Heart right ventricle (tissue), 16 donors: ENCODE measurements at regions of chr16 and their contacts with region 1.

Region 1: DNA sequence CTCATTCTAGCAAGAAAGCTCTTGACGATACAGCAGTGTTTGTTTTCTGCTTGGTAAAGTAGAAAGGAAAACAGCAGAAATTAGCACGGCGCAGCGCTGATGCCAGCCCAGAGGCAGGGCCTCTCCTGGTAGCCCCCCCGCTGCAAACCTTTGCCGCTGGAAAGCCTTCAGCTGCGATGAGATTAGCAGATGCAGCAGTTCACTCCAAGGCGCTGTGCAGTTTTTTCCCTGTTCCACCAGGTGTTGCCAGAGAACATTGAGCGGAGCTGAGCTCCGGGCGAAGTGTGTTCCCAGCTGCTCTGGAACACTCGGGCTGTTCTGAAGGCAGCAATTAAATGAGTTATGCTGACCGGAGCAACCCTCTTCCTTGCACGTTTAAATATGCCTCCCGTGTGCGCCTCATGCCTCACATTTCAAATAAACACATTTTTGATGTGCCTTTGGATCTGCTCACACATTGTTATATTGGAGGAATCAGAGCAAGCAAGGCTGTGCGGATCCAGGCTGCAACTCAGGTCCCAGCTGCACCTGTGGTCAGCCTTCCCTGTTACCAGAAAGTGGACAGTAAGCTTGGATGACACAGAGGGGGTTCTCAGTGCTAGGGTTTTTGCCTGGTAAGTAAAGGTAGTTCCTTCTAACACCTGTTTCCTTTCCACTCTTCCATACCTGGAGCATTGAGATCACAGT is 72.7 kb downstream of the RBFOX1 start:
- DNase-seq: peak; percentile 49 to 50
- ATAC-seq: peak; percentile 86 to 96 (median 94)
- H3K4me3 ChIP-seq: peak overlapping the region in 3 of 10 donors; percentile 0 to 24 (median 1)
- H3K27ac ChIP-seq: no peak overlapping the region
- H3K4me1 ChIP-seq: peaks cover 0 to 20% (median 3%) of the 10 kb centered on the region in 9 donors
- H3K27me3 ChIP-seq: no peaks in the 10 kb centered on the region
- CTCF ChIP-seq: peak; percentile 25 to 69 (median 47)

Region 2: GRCh38 chr16:7602291-7602950 is 197.1 kb after region 1 on chr16:
- intact Hi-C with region 1: loop called in 1 of 10 experiments (anchors 10 kb)
- DNase-seq: no peak
- ATAC-seq: no peak
- H3K4me3 ChIP-seq: no peak overlapping the region
- H3K27ac ChIP-seq: peak overlapping the region in 5 of 10 donors; percentile 8 to 59 (median 42)
- H3K4me1 ChIP-seq: peaks cover 0 to 40% (median 7%) of the 10 kb centered on the region in 9 donors
- H3K27me3 ChIP-seq: no peaks in the 10 kb centered on the region
- CTCF ChIP-seq: no peak

Region 3: GRCh38 chr16:7615565-7615964 is 210.3 kb after region 1 on chr16:
- intact Hi-C with region 1: loop called in 1 of 10 experiments (anchors 10 kb)
- DNase-seq: no peak
- ATAC-seq: no peak
- H3K4me3 ChIP-seq: no peak overlapping the region
- H3K27ac ChIP-seq: no peak overlapping the region
- H3K4me1 ChIP-seq: peaks cover 0 to 12% (median 0%) of the 10 kb centered on the region in 9 donors
- H3K27me3 ChIP-seq: no peaks in the 10 kb centered on the region
- CTCF ChIP-seq: peak in 3 of 9 donors; percentile 4 to 13 (median 10)

Region 4: DNA sequence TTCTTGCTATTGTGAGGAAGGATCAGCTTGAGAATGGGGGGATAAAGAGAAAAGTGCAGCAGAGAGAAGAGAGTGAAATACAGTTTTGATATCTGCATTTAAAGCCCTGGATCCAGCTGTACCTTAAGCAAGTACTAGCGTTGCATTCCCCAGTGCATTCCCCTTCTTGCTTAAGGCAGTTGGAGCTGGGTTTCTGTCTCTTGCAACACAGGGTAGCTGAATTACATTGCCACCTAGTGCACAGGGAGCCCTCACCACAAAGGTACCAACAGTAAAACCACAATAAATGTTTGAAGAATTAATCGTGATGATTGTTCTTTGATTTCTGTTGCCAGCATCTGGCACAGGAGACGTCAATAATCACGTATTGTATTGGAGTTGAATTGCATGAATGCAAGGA is 516.0 kb after region 1 on chr16:
- intact Hi-C with region 1: loop called in 1 of 10 experiments (anchors 10 kb)
- DNase-seq: no peak
- ATAC-seq: no peak
- H3K4me3 ChIP-seq: no peak overlapping the region
- H3K27ac ChIP-seq: no peak overlapping the region
- H3K4me1 ChIP-seq: no peaks in the 10 kb centered on the region
- H3K27me3 ChIP-seq: peaks cover 0 to 3% (median 0%) of the 10 kb centered on the region in 7 donors
- CTCF ChIP-seq: peak in 3 of 9 donors; percentile 12 to 22 (median 15)